Activated CD4-positive, alpha-beta memory T cell treated with anti-CD3 and anti-CD28 coated beads for 36 hours (primary cell): ENCODE measurements at regions of chr11 and their contacts with region 1.

Region 1: GRCh38 chr11:122788781-122789535 is 49.3 kb upstream of the CRTAM start:
- DNase-seq: no peak
- H3K4me3 Mint-ChIP-seq: no peak overlapping the region
- H3K27ac Mint-ChIP-seq: no peak overlapping the region
- H3K4me1 Mint-ChIP-seq: no peaks in the 10 kb centered on the region
- H3K27me3 Mint-ChIP-seq: no peaks in the 10 kb centered on the region

Region 2: DNA sequence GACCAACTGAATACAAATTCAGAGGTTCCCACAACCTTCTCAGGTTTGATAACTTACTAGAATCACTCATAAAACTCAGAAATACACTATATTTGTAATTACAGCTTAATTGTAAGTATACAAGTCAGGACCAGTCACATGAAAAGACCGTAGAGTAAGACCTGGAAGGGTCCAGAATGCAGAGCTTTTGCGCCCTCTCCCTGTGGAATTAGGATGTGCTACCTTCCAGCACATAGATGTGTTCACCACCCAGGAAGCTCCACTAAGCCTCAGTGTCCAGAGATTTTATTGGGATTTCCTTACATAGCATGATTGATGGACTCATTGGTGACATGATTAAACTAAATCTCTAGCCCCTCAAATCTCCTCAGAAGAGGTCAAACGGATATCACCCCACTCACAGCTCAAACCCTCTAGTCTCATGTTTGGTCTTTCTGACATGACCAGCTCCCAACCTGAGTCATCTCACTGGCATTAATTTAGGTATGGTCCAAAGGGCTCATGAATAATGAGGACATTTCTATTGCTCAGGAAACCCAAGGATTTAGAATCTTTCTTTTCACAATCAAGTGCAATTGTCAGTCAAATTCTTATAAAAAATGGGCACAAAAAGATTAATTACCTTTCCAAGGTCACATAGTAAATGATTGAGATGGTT is 210.7 kb before region 1 on chr11:
- CTCF ChIA-PET with region 1: interaction called, 79 read pairs
- POLR2A ChIA-PET with region 1: no interaction called
- intact Hi-C with region 1: no loop called
- DNase-seq: no peak
- H3K4me3 Mint-ChIP-seq: no peak overlapping the region
- H3K27ac Mint-ChIP-seq: no peak overlapping the region
- H3K4me1 Mint-ChIP-seq: peaks cover 8% of the 10 kb centered on the region
- H3K27me3 Mint-ChIP-seq: peaks cover 2% of the 10 kb centered on the region

Region 3: GRCh38 chr11:122814401-122814800 is 25.4 kb after region 1 on chr11:
- CTCF ChIA-PET with region 1: no interaction called
- POLR2A ChIA-PET with region 1: no interaction called
- intact Hi-C with region 1: no loop called
- DNase-seq: no peak
- H3K4me3 Mint-ChIP-seq: no peak overlapping the region
- H3K27ac Mint-ChIP-seq: no peak overlapping the region
- H3K4me1 Mint-ChIP-seq: peaks cover 9% of the 10 kb centered on the region
- H3K27me3 Mint-ChIP-seq: no peaks in the 10 kb centered on the region